BJ (cell line): ENCODE measurements at regions of chr1 and their contacts with region 1.

Region 1: GRCh38 chr1:156445789-156446263 is 54.7 kb downstream of the MEF2D start:
- DNase-seq: peak; percentile 13
- H3K4me3 ChIP-seq: no peak overlapping the region
- H3K27me3 ChIP-seq: peaks cover 33% of the 10 kb centered on the region
- CTCF ChIP-seq: peak; percentile 98

Region 2: DNA sequence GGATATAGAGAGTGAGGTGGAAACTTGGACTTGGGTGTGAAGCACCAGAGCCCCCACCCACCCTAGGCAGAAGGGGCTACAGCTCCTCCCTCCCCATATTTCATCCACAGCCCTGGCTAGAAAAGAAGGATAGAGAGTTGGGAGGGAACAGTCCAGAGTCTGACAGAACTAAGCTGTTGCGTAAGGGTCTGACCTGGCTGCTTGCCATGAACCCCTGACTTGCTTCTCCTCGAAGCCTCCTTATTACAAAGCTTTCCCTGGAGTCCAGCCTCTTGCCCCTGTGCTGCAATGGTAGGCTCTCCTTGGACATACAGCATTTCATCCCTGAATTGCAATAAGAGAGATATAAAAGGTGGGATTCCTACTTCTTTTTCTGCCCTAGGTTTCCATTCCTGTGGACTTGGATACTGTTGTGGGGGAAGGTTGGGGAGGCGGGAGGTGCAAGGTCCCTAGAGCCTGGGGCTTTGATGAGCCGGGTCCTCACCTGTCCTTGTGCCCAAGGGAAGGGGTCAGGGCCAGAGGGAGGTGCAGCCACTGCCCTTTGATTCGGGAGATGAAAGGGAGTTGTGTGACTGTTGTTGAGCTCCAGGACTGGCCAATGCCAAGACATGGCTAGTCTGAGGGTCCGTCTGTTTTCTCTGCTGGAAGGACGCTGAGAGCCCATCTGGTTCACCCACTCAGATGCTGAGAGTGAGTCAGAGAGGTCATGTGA is 74.1 kb before region 1 on chr1:
- CTCF ChIA-PET with region 1: interaction called, 10 read pairs
- POLR2A ChIA-PET with region 1: no interaction called
- DNase-seq: no peak
- H3K4me3 ChIP-seq: no peak overlapping the region
- H3K27me3 ChIP-seq: peaks cover 15% of the 10 kb centered on the region
- CTCF ChIP-seq: no peak

Region 3: DNA sequence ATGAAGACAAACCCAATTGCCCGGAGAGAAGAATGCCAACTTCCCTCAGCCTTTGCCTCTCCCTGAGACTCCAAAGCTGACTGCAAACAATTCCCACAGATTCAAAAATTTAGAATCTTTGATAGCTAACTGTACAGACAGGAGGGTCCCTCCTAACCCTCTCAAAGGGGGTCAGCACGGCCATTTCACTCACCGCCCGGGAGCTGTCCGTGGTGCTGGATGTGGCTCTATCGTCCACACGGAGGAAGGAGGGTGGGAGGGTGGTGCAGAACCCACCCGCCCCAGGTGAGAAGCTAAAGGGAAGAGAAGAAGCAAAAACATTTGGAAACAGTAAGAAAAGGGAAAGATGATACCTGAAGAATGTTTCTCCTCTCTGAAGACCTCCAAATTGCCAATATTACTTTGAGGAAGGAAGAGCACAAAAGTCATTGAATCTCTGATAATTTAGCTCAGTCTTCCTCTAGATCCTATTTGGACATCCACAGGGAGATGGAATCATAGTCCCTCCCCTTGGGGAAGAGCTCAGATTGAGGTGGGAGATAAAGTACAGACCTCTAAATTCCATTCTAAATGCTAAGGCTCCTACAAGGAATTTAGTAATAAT is 31.3 kb before region 1 on chr1:
- CTCF ChIA-PET with region 1: interaction called, 13 read pairs
- POLR2A ChIA-PET with region 1: no interaction called
- DNase-seq: no peak
- H3K4me3 ChIP-seq: no peak overlapping the region
- H3K27me3 ChIP-seq: peaks cover 21% of the 10 kb centered on the region
- CTCF ChIP-seq: no peak

Region 4: GRCh38 chr1:156435545-156436141 is 10.2 kb before region 1 on chr1:
- CTCF ChIA-PET with region 1: interaction called, 38 read pairs
- POLR2A ChIA-PET with region 1: no interaction called
- DNase-seq: no peak
- H3K4me3 ChIP-seq: no peak overlapping the region; the same call in 1 of the 2 replicates
- H3K27me3 ChIP-seq: peaks cover 82% of the 10 kb centered on the region
- CTCF ChIP-seq: no peak

Region 5: DNA sequence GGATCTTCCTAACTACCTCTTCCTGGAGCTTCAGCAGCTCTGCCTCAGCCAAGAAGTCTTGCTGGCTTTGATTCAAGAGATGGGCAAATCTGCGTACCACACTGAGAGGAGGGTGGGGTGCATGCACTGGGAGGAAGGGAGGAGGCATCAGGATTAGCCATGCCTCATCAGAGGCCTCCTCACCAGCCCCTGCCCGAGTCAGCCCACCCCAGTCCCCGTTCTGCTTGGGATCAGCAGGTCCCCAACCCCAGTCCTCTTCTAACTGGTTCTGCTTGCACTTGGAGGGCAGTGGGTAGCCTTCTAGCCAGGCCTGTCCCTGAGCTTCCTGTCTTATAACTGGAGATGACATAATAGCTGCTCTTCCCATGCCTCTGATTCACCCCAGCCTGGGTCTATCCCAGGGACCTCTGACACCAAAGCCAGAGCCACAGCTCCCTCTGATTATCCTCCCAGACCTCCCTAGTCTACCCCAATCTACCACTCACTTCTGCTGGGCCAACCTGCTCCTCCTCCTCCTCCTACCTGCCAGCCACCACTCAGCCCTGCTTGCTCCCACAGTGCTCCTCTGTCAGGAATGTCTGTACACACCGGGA is 95.1 kb after region 1 on chr1:
- CTCF ChIA-PET with region 1: no interaction called
- POLR2A ChIA-PET with region 1: no interaction called
- DNase-seq: no peak
- H3K4me3 ChIP-seq: no peak overlapping the region
- H3K27me3 ChIP-seq: no peaks in the 10 kb centered on the region
- CTCF ChIP-seq: no peak

Region 6: GRCh38 chr1:156608036-156608674 is 162.3 kb after region 1 on chr1:
- CTCF ChIA-PET with region 1: interaction called, 10 read pairs
- POLR2A ChIA-PET with region 1: no interaction called
- DNase-seq: no peak
- H3K4me3 ChIP-seq: no peak overlapping the region
- H3K27me3 ChIP-seq: peaks cover 11% of the 10 kb centered on the region
- CTCF ChIP-seq: peak; percentile 85